Adrenal gland (tissue), 19 donors: ENCODE measurements at regions of chr5 and their contacts with region 1.

Region 1: GRCh38 chr5:129767906-129768380 is 20.0 kb downstream of the MINAR2 start:
- DNase-seq: peak; percentile 69 to 88 (median 76)
- H3K4me3 ChIP-seq: no peak overlapping the region
- H3K27ac ChIP-seq: no peak overlapping the region
- H3K4me1 ChIP-seq: no peaks in the 10 kb centered on the region
- H3K27me3 ChIP-seq: no peaks in the 10 kb centered on the region
- CTCF ChIP-seq: peak; percentile 95 to 99 (median 98)
- POLR2A ChIP-seq: no peak

Region 2: GRCh38 chr5:128905571-128906110 is 862.3 kb before region 1 on chr5:
- intact Hi-C with region 1: loop called in 1 of 2 experiments (anchors 5 kb)
- DNase-seq: peak; percentile 34 to 60 (median 49)
- H3K4me3 ChIP-seq: no peak overlapping the region
- H3K27ac ChIP-seq: no peak overlapping the region
- H3K4me1 ChIP-seq: no peaks in the 10 kb centered on the region
- H3K27me3 ChIP-seq: no peaks in the 10 kb centered on the region
- CTCF ChIP-seq: peak; percentile 75 to 90 (median 85)
- POLR2A ChIP-seq: no peak

Region 3: GRCh38 chr5:129172580-129172979 is 595.4 kb before region 1 on chr5:
- intact Hi-C with region 1: loop called in 1 of 2 experiments (anchors 10 kb)
- DNase-seq: no peak
- H3K4me3 ChIP-seq: no peak overlapping the region
- H3K27ac ChIP-seq: no peak overlapping the region
- H3K4me1 ChIP-seq: no peaks in the 10 kb centered on the region
- H3K27me3 ChIP-seq: no peaks in the 10 kb centered on the region
- CTCF ChIP-seq: peak in 5 of 6 experiments; percentile 24 to 56 (median 31)
- POLR2A ChIP-seq: no peak

Region 4: GRCh38 chr5:129244478-129244877 is 523.5 kb before region 1 on chr5:
- intact Hi-C with region 1: no loop called
- DNase-seq: no peak
- H3K4me3 ChIP-seq: no peak overlapping the region
- H3K27ac ChIP-seq: no peak overlapping the region
- H3K4me1 ChIP-seq: no peaks in the 10 kb centered on the region
- H3K27me3 ChIP-seq: no peaks in the 10 kb centered on the region
- CTCF ChIP-seq: no peak
- POLR2A ChIP-seq: no peak

Region 5: DNA sequence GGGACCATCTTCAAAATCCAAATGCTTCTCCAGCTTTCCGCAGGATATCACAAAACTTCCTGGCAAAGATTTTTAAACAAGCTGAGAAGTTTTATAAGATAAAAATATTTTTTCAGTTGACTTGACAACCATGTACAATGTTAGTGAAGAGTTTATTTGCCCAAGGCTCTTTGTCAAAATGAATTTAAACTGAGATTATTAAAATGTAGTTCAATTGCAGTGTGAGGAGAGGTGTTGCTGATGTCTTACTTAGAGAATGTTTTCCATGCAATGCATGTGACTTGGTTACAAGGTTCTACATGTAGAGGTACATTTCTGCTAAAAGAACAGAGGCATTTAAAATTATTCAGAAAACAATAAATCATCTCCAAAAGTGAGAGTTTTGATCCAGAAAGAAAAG is 151.4 kb before region 1 on chr5:
- intact Hi-C with region 1: no loop called
- DNase-seq: no peak
- H3K4me3 ChIP-seq: no peak overlapping the region
- H3K27ac ChIP-seq: no peak overlapping the region
- H3K4me1 ChIP-seq: no peaks in the 10 kb centered on the region
- H3K27me3 ChIP-seq: no peaks in the 10 kb centered on the region
- CTCF ChIP-seq: no peak
- POLR2A ChIP-seq: no peak

Region 6: GRCh38 chr5:129664337-129664937 is 103.5 kb before region 1 on chr5:
- intact Hi-C with region 1: loop called in 1 of 2 experiments (anchors 5 kb)
- DNase-seq: peak; percentile 49 to 80 (median 72)
- H3K4me3 ChIP-seq: no peak overlapping the region
- H3K27ac ChIP-seq: no peak overlapping the region
- H3K4me1 ChIP-seq: no peaks in the 10 kb centered on the region
- H3K27me3 ChIP-seq: no peaks in the 10 kb centered on the region
- CTCF ChIP-seq: peak; percentile 62 to 81 (median 72)
- POLR2A ChIP-seq: no peak

Region 7: DNA sequence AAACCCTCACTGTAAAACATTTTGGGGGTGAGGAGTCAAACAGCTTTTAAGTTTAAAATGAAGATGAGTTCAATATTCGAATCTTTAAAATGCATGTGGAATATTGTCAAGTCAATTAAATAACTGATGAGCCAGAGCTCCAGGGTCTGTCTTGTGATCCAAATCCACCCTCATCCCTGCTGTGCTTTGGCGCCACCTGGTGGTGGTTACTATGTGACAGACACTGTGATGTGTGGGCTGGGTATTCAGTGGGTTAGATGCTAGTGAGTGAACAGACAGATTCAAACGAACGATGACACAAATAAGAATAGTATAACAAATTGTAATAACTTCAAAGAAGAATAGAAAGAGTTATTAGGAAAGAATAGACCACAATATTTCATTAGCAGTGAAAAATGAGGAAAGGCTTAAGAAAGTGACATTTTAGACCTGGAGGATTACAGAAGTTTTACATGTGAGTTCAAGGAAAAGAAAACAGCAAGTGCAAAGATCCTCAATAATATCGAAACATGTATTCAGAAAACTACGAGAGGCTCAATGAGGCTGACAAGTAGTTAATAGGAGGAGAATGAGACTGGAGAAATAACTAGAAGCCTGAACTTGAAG is 84.9 kb after region 1 on chr5:
- intact Hi-C with region 1: loop called (anchors 5 to 10 kb)
- DNase-seq: peak; percentile 62 to 87 (median 81)
- H3K4me3 ChIP-seq: no peak overlapping the region
- H3K27ac ChIP-seq: no peak overlapping the region
- H3K4me1 ChIP-seq: peaks cover 0 to 5% of the 10 kb centered on the region in 2 donors
- H3K27me3 ChIP-seq: no peaks in the 10 kb centered on the region
- CTCF ChIP-seq: peak; percentile 70 to 94 (median 76)
- POLR2A ChIP-seq: no peak